PC-9 (cell line): ENCODE measurements at regions of chr2 and their contacts with region 1.

Region 1: GRCh38 chr2:198084136-198084535 is 279.7 kb downstream of the PLCL1 start:
- DNase-seq: no peak
- H3K4me3 ChIP-seq: no peak overlapping the region
- H3K27ac ChIP-seq: no peak overlapping the region
- H3K4me1 ChIP-seq: no peaks in the 10 kb centered on the region
- H3K27me3 ChIP-seq: no peaks in the 10 kb centered on the region
- CTCF ChIP-seq: no peak

Region 2: DNA sequence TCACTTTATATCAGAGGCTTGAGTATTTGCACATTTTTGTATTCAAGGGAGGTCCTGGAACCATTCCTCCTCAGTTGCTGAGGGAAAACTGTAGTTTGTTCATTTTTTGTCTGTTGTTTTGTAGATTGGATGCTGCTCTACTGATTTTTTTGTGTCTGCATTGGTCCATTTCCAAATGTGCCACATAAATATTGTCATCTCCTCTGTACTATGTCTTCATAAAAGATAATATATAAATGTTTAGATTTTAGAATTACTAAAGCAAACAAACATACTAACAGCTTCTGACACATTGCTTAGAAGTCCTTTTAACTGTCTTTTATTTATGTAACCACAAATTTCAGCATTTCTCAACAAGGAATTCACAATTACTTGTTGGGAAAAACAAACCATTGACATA is 77.0 kb after region 1 on chr2:
- CTCF ChIA-PET with region 1: no interaction called
- POLR2A ChIA-PET with region 1: no interaction called
- intact Hi-C with region 1: loop called (anchors 2 kb)
- DNase-seq: no peak
- H3K4me3 ChIP-seq: no peak overlapping the region
- H3K27ac ChIP-seq: no peak overlapping the region
- H3K4me1 ChIP-seq: no peaks in the 10 kb centered on the region
- H3K27me3 ChIP-seq: no peaks in the 10 kb centered on the region
- CTCF ChIP-seq: no peak